B cell (primary cell): ENCODE measurements at regions of chr2 and their contacts with region 1.

Region 1: DNA sequence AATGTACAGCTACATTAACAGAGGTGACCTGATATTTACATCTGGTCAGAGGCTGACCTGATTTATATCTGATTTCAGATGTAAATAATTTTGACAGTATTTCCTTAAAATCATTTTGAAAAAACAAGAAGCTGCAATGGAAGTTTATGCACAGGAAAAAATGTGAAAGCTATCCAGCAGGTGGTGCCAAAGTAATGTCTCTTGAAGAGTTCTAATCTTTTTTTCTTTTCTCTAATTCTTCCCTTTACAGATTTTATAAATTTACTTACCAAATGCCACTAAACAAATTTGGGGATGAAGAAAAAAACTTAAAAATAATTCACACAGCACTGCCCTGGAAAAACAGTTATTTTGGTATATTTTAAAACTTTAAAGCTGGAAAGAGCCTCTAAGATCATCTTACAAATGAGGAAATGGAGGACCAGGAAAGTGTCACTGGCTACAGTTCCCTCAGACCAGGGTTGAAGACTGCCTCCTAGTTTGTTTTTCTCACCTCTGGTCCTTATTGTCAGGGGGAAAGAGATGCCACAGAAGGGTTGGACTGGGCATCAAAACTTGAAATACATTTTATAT is 16.4 kb upstream of the FBLN7 start:
- DNase-seq: peak; percentile 56
- ATAC-seq: no peak
- H3K4me3 ChIP-seq: no peak overlapping the region
- H3K4me3 Mint-ChIP-seq: no peak overlapping the region
- H3K27ac ChIP-seq: no peak overlapping the region
- H3K27ac Mint-ChIP-seq: no peak overlapping the region
- H3K4me1 ChIP-seq: no peaks in the 10 kb centered on the region
- H3K4me1 Mint-ChIP-seq: no peaks in the 10 kb centered on the region
- H3K27me3 ChIP-seq: no peaks in the 10 kb centered on the region
- H3K27me3 Mint-ChIP-seq: no peaks in the 10 kb centered on the region
- CTCF ChIP-seq: peak; percentile 76

Region 2: GRCh38 chr2:111239107-111239506 is 882.7 kb before region 1 on chr2:
- CTCF ChIA-PET with region 1: no interaction called
- POLR2A ChIA-PET with region 1: no interaction called
- intact Hi-C with region 1: no loop called
- DNase-seq: no peak
- ATAC-seq: no peak
- H3K4me3 ChIP-seq: no peak overlapping the region
- H3K4me3 Mint-ChIP-seq: no peak overlapping the region
- H3K27ac ChIP-seq: no peak overlapping the region
- H3K27ac Mint-ChIP-seq: no peak overlapping the region
- H3K4me1 ChIP-seq: peaks cover 0 to 3% of the 10 kb centered on the region in 2 donors
- H3K4me1 Mint-ChIP-seq: no peaks in the 10 kb centered on the region
- H3K27me3 ChIP-seq: no peaks in the 10 kb centered on the region
- H3K27me3 Mint-ChIP-seq: no peaks in the 10 kb centered on the region
- CTCF ChIP-seq: no peak

Region 3: GRCh38 chr2:112254466-112255239 is 132.9 kb after region 1 on chr2 and contains the start of gene ZC3H8:
- CTCF ChIA-PET with region 1: interaction called, 9 read pairs
- POLR2A ChIA-PET with region 1: no interaction called
- intact Hi-C with region 1: loop called (anchors 10 kb)
- DNase-seq: peak; percentile 95
- ATAC-seq: peak; percentile 89
- H3K4me3 ChIP-seq: peak within 1 kb of the TSS; percentile 72 to 84 (median 79)
- H3K4me3 Mint-ChIP-seq: peak within 1 kb of the TSS; percentile 93
- H3K27ac ChIP-seq: peak within 1 kb of the TSS; percentile 83 to 93
- H3K27ac Mint-ChIP-seq: peak within 1 kb of the TSS; percentile 92
- H3K4me1 ChIP-seq: peaks cover 9 to 17% of the 10 kb centered on the region in 2 donors
- H3K4me1 Mint-ChIP-seq: peaks cover 23% of the 10 kb centered on the region
- H3K27me3 ChIP-seq: no peaks in the 10 kb centered on the region
- H3K27me3 Mint-ChIP-seq: no peaks in the 10 kb centered on the region
- CTCF ChIP-seq: no peak
- total RNA-seq, gene ZC3H8: 26.0 and 27.2 TPM in 2 replicates